ENCODE measurements at regions of chr3 and their contacts with region 1.

Region 1: DNA sequence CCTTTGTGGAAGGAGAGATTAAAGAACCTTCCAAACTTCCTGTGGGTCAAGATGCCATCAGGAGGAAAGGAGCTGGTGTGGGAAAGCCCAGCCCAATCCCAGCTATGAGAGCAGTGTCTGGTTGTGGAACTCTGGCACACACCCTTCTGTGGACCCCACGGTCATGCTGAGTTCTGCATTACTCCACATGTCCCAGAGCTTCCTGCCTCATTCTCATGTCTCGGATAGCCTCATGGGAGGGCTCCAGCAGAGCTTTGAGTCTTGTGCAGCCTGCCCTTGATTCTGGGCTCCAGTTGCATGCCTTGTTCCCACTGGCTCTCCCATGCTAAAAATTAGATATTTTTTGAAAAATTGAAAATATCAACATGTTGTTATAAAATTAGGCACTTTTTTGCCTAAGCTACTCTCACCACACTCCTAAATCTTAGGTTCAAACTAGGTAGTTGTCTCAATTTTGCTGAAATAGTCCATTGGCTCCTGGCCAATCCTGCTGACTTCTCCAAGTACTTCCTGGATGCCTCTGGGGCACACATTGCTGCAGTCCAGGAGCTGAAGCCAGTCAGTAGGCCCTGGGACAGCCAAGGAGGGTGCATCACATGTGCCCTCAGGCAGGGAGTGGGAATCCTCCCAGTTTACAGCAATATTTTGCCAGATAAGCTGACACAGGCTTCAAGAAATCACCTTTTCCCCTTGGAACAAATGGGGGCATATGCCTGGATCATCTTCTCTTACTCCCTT is 144.3 kb downstream of the EEFSEC start:
- DNase-seq: peak in 1 of 9 donors; percentile 7
- ATAC-seq: no peak
- H3K4me3 ChIP-seq: no peak overlapping the region
- H3K4me3 Mint-ChIP-seq: peak overlapping the region in 5 of 10 donors; percentile 8 to 85 (median 52)
- H3K27ac ChIP-seq: no peak overlapping the region
- H3K27ac Mint-ChIP-seq: peak overlapping the region in 8 of 9 donors; percentile 60 to 100 (median 89)
- H3K4me1 ChIP-seq: peaks cover 16 to 43% of the 10 kb centered on the region in 2 donors
- H3K4me1 Mint-ChIP-seq: peaks cover 30 to 93% (median 77%) of the 10 kb centered on the region in 7 donors
- H3K27me3 ChIP-seq: no peaks in the 10 kb centered on the region
- H3K27me3 Mint-ChIP-seq: no peaks in the 10 kb centered on the region

Region 2: GRCh38 chr3:128285967-128286321 is 11.6 kb before region 1 on chr3:
- CTCF ChIA-PET with region 1: no interaction called
- POLR2A ChIA-PET with region 1: interaction called, 6 read pairs
- intact Hi-C with region 1: loop called in 1 of 2 experiments (anchors 1 kb)
- DNase-seq: no peak
- ATAC-seq: no peak
- H3K4me3 ChIP-seq: no peak overlapping the region
- H3K4me3 Mint-ChIP-seq: peak overlapping the region in 1 of 10 donors; percentile 5
- H3K27ac ChIP-seq: no peak overlapping the region
- H3K27ac Mint-ChIP-seq: peak overlapping the region in 7 of 9 donors; percentile 7 to 87 (median 58)
- H3K4me1 ChIP-seq: no peaks in the 10 kb centered on the region
- H3K4me1 Mint-ChIP-seq: peaks cover 0 to 34% (median 25%) of the 10 kb centered on the region in 7 donors
- H3K27me3 ChIP-seq: no peaks in the 10 kb centered on the region
- H3K27me3 Mint-ChIP-seq: no peaks in the 10 kb centered on the region

Region 3: GRCh38 chr3:128316481-128316891 is 18.9 kb after region 1 on chr3:
- CTCF ChIA-PET with region 1: interaction called, 36 read pairs
- POLR2A ChIA-PET with region 1: interaction called, 41 read pairs
- intact Hi-C with region 1: loop called in 1 of 2 experiments (anchors 1 kb)
- DNase-seq: peak; percentile 35 to 91 (median 86)
- ATAC-seq: peak; percentile 97
- H3K4me3 ChIP-seq: no peak overlapping the region
- H3K4me3 Mint-ChIP-seq: peak overlapping the region; percentile 23 to 78 (median 56)
- H3K27ac ChIP-seq: peak overlapping the region; percentile 78
- H3K27ac Mint-ChIP-seq: peak overlapping the region; percentile 71 to 97 (median 88)
- H3K4me1 ChIP-seq: peaks cover 9 to 91% of the 10 kb centered on the region in 2 donors
- H3K4me1 Mint-ChIP-seq: peaks cover 16 to 97% (median 84%) of the 10 kb centered on the region in 7 donors
- H3K27me3 ChIP-seq: no peaks in the 10 kb centered on the region
- H3K27me3 Mint-ChIP-seq: no peaks in the 10 kb centered on the region

Region 4: GRCh38 chr3:128456776-128457715 is 159.5 kb after region 1 on chr3:
- CTCF ChIA-PET with region 1: no interaction called
- POLR2A ChIA-PET with region 1: no interaction called
- intact Hi-C with region 1: no loop called
- DNase-seq: no peak
- ATAC-seq: no peak
- H3K4me3 ChIP-seq: no peak overlapping the region
- H3K4me3 Mint-ChIP-seq: no peak overlapping the region
- H3K27ac ChIP-seq: no peak overlapping the region
- H3K27ac Mint-ChIP-seq: no peak overlapping the region
- H3K4me1 ChIP-seq: no peaks in the 10 kb centered on the region
- H3K4me1 Mint-ChIP-seq: peaks cover 0 to 4% (median 0%) of the 10 kb centered on the region in 7 donors
- H3K27me3 ChIP-seq: no peaks in the 10 kb centered on the region
- H3K27me3 Mint-ChIP-seq: peaks cover 12 to 30% (median 16%) of the 10 kb centered on the region in 5 donors